ENCODE measurements at regions of chr1 and their contacts with region 1.

Region 1: DNA sequence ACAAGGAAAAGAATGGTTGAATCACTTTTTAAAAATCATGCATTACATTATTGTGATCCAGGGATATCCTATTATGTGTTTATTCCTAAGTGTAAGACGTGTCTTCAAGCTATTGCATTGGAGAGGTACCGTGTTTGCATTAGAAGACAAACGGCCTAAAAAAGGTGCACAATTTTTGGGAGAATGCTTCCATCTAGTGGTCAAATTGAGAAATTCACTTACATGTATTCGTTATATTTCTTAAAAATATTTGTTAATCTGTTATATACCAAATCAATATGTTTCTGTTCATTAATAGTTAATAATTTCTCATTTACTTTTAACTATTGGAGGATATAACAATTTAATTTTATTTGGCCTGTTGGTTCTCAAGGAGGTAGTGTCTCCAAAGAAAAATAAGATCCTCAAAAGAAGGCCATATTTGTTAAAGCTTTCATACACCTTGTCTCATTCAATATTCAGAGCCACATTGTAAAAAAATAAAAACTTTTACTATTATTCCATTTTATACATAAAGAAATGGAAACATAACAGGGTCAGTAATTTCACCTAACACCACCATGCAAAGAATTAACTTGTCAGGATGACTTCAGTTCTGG is 40.5 kb upstream of the KCTD3 start:
- DNase-seq: no peak
- H3K4me3 ChIP-seq: no peak overlapping the region
- H3K27ac ChIP-seq: no peak overlapping the region
- H3K4me1 ChIP-seq: no peaks in the 10 kb centered on the region
- H3K27me3 ChIP-seq: no peaks in the 10 kb centered on the region
- CTCF ChIP-seq: peak; percentile 38 to 80 (median 67)
- POLR2A ChIP-seq: no peak

Region 2: GRCh38 chr1:214623430-214623829 is 903.2 kb before region 1 on chr1:
- intact Hi-C with region 1: loop called (anchors 10 kb)
- DNase-seq: no peak
- H3K4me3 ChIP-seq: no peak overlapping the region
- H3K27ac ChIP-seq: no peak overlapping the region
- H3K4me1 ChIP-seq: no peaks in the 10 kb centered on the region
- H3K27me3 ChIP-seq: no peaks in the 10 kb centered on the region
- CTCF ChIP-seq: no peak
- POLR2A ChIP-seq: no peak

Region 3: GRCh38 chr1:214658786-214659185 is 867.9 kb before region 1 on chr1:
- intact Hi-C with region 1: loop called (anchors 10 kb)
- DNase-seq: peak; percentile 26 to 30
- H3K4me3 ChIP-seq: no peak overlapping the region
- H3K27ac ChIP-seq: no peak overlapping the region
- H3K4me1 ChIP-seq: no peaks in the 10 kb centered on the region
- H3K27me3 ChIP-seq: no peaks in the 10 kb centered on the region
- CTCF ChIP-seq: peak in 4 of 6 experiments; percentile 30 to 62 (median 50)
- POLR2A ChIP-seq: no peak

Region 4: GRCh38 chr1:215273838-215274516 is 252.7 kb before region 1 on chr1:
- intact Hi-C with region 1: no loop called
- DNase-seq: no peak
- H3K4me3 ChIP-seq: no peak overlapping the region
- H3K27ac ChIP-seq: no peak overlapping the region
- H3K4me1 ChIP-seq: no peaks in the 10 kb centered on the region
- H3K27me3 ChIP-seq: no peaks in the 10 kb centered on the region
- CTCF ChIP-seq: no peak
- POLR2A ChIP-seq: no peak

Measured in thyroid gland (tissue), 4 donors.